ENCODE measurements at regions of chr7 and their contacts with region 1.

Region 1: GRCh38 chr7:150448789-150449147 is 1.7 kb upstream of the GIMAP8 start:
- DNase-seq: peak; percentile 96
- H3K4me3 Mint-ChIP-seq: peak overlapping the region; percentile 100
- H3K27ac Mint-ChIP-seq: peak overlapping the region; percentile 98
- H3K4me1 Mint-ChIP-seq: peaks cover 54% of the 10 kb centered on the region
- H3K27me3 Mint-ChIP-seq: no peaks in the 10 kb centered on the region

Region 2: DNA sequence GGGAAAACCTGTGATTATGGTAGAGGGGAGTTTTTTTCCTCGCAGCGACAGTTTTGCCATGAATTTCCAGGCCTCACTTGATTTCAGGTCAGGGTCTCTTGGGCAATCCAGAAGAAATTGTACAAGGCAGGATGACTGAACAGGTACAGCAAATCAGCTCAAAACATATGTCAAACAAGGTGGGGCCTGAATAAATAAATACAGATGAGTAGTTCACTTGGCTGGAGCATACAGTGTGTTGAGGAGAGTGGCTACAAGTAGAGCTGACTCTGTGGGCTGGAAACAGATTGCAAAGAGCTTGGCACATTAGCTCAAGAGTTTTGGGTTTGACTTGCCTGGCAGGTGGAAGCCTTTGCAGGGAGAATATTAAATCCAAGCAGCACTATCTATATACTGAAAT is 16.6 kb after region 1 on chr7:
- intact Hi-C with region 1: loop called (anchors 2 kb)
- DNase-seq: no peak
- H3K4me3 Mint-ChIP-seq: no peak overlapping the region
- H3K27ac Mint-ChIP-seq: no peak overlapping the region
- H3K4me1 Mint-ChIP-seq: peaks cover 61% of the 10 kb centered on the region
- H3K27me3 Mint-ChIP-seq: no peaks in the 10 kb centered on the region

Region 3: DNA sequence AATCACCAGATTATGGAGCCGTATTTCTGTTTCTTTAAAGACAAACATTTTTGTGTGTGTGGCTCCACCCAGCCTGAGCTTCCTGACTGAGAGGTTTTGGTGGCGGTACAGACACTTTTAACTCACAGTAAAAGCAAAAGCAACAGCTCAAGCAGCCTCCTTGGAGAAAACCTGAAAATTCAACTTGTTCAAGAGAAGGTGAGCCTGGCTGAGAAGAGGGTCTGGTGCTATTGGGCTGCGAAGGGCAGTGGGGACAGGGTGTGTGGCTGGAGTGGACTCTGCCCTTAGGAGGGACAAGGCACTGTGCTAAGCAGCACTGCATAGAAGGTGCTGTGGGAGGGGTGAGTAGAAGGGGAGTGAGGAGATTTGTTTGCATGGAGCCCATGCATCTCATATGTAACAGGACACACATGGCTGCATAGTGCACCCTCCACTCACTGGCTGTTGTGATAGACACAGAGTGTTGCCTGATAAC is 66.0 kb after region 1 on chr7 and contains the start of gene GIMAP7:
- intact Hi-C with region 1: loop called (anchors 1 kb)
- DNase-seq: peak; percentile 93
- H3K4me3 Mint-ChIP-seq: peak within 1 kb of the TSS; percentile 99
- H3K27ac Mint-ChIP-seq: peak within 1 kb of the TSS; percentile 99
- H3K4me1 Mint-ChIP-seq: peaks cover 54% of the 10 kb centered on the region
- H3K27me3 Mint-ChIP-seq: no peaks in the 10 kb centered on the region
- total RNA-seq, gene GIMAP7: 40.5 and 45.0 TPM in 2 replicates

Region 4: GRCh38 chr7:150567169-150567568 is 118.4 kb after region 1 on chr7 and contains the start of gene GIMAP4:
- intact Hi-C with region 1: loop called (anchors 1 kb)
- DNase-seq: peak; percentile 77
- H3K4me3 Mint-ChIP-seq: peak within 1 kb of the TSS; percentile 86
- H3K27ac Mint-ChIP-seq: peak within 1 kb of the TSS; percentile 95
- H3K4me1 Mint-ChIP-seq: peaks cover 59% of the 10 kb centered on the region
- H3K27me3 Mint-ChIP-seq: no peaks in the 10 kb centered on the region
- total RNA-seq, gene GIMAP4: 61.1 and 62.7 TPM in 2 replicates

Region 5: GRCh38 chr7:150631866-150632864 is 183.4 kb after region 1 on chr7 and contains the start of gene GIMAP6:
- intact Hi-C with region 1: loop called (anchors 2 kb)
- DNase-seq: peak; percentile 85
- H3K4me3 Mint-ChIP-seq: peak within 1 kb of the TSS; percentile 93
- H3K27ac Mint-ChIP-seq: peak within 1 kb of the TSS; percentile 92
- H3K4me1 Mint-ChIP-seq: peaks cover 62% of the 10 kb centered on the region
- H3K27me3 Mint-ChIP-seq: no peaks in the 10 kb centered on the region
- total RNA-seq, gene GIMAP6: 35.5 and 35.8 TPM in 2 replicates

Region 6: GRCh38 chr7:150685219-150686029 is 236.7 kb after region 1 on chr7 and contains the start of gene GIMAP2:
- intact Hi-C with region 1: loop called (anchors 2 kb)
- DNase-seq: peak; percentile 83
- H3K4me3 Mint-ChIP-seq: peak within 1 kb of the TSS; percentile 98
- H3K27ac Mint-ChIP-seq: peak within 1 kb of the TSS; percentile 99
- H3K4me1 Mint-ChIP-seq: peaks cover 65% of the 10 kb centered on the region
- H3K27me3 Mint-ChIP-seq: no peaks in the 10 kb centered on the region
- total RNA-seq, gene GIMAP2: 28.2 TPM in 2 replicates

Measured in activated CD4-positive, alpha-beta T cell treated with anti-CD3 and anti-CD28 coated beads, Interleukin-2, amount 10 ng/mL, durations not matched to agents 24 days and 14 days (primary cell).